ENCODE measurements at regions of chr1 and their contacts with region 1.

Region 1: GRCh38 chr1:85200870-85201339 is at the start of gene SYDE2:
- DNase-seq: peak; percentile 91

Region 2: GRCh38 chr1:85109475-85109874 is 91.4 kb before region 1 on chr1:
- CTCF ChIA-PET with region 1: interaction called, 12 read pairs
- POLR2A ChIA-PET with region 1: no interaction called
- DNase-seq: peak; percentile 84

Region 3: GRCh38 chr1:85188530-85188929 is 12.4 kb before region 1 on chr1:
- CTCF ChIA-PET with region 1: no interaction called
- POLR2A ChIA-PET with region 1: no interaction called
- DNase-seq: no peak

Region 4: GRCh38 chr1:85224734-85225623 is 24.1 kb after region 1 on chr1:
- CTCF ChIA-PET with region 1: no interaction called
- POLR2A ChIA-PET with region 1: interaction called, 15 read pairs
- DNase-seq: no peak